ENCODE measurements at regions of chr3 and their contacts with region 1.

Region 1: DNA sequence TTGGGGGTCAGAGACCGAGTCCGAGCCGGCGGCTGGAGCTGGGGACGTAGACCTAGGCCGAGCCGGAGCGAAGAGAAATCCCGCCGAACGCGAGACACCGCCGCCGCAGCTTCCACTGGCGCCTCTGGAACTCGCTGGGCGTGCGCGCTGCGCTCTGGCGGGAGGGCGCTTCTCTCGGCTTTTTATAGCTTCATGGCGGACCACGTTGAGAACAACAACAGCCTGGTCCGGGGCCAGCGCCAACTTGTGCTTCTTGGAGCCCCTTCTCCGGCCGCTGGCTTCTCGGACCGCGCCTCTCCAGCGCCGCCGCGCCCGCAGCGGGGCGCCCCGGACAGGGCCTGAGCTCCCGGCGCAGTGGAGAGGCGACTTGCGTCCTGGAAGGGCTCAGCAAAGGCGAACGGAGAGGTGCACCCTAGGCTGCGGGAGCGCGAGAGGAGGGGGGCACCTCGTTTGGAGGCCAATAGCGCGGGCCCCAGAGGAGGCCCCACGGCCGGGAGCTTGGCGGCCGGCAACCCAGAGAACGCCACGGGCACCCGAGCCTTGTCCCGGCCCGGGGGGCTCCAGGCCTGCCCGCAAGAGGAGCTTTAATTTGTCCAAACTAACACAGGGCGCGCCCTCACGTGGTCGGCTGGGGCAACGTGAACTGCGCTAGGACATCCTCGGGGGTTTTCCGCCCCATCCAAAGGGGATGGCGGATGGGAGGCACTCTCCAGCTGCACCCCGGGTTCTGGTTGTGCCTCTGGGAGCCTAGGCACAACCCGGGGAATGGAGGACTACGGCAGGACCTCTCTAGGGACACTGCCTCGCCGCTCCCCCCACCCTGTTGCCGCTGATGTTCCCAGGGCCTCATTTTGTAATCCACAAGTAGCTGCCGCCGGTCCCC is 37.7 kb downstream of the HMCES start:
- DNase-seq: peak; percentile 75 to 78 (median 75)
- H3K4me3 ChIP-seq: peak overlapping the region; percentile 53 to 93 (median 80)
- H3K4me3 Mint-ChIP-seq: peak overlapping the region; percentile 81 to 97
- H3K27ac ChIP-seq: peak overlapping the region in 1 of 2 donors; percentile 77
- H3K27ac Mint-ChIP-seq: peak overlapping the region; percentile 24 to 80 (median 59)
- H3K4me1 ChIP-seq: peaks cover 24 to 30% of the 10 kb centered on the region in 2 donors
- H3K4me1 Mint-ChIP-seq: peaks cover 30% of the 10 kb centered on the region
- H3K27me3 ChIP-seq: no peaks in the 10 kb centered on the region
- H3K27me3 Mint-ChIP-seq: peaks cover 1 to 12% (median 4%) of the 10 kb centered on the region in 3 donors
- CTCF ChIP-seq: peak; percentile 56

Region 2: DNA sequence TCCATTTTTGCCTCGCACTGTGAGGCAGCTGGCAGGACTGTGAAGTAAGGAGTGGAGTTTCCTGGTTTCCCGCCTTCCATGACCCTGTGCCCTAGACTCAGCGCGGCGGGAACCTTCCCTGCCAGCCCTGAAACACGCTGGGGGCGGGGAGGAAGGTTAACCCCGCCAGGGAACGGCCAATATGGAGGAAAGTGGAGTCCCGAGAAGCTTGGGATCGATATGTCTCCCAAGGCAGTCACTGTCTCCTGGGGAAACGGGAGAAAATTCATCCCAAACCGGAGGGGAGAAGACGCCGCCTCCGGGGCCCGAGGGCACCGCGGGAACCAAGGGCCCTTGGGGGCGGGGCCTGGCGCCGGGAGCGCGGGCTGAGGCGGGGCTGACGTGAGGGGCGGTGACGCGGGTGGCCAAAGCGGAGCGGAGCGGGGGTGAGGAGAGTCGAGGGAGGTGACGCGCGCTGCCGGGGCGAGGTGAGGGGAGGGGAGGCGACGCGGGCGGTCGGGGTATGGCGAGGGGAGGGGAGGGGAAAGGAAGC is 37.9 kb before region 1 on chr3 and contains the start of gene HMCES:
- intact Hi-C with region 1: loop called in 1 of 2 experiments (anchors 5 kb)
- DNase-seq: peak; percentile 82 to 88 (median 86)
- H3K4me3 ChIP-seq: peak within 1 kb of the TSS; percentile 70 to 87 (median 75)
- H3K4me3 Mint-ChIP-seq: peak within 1 kb of the TSS; percentile 98 to 99
- H3K27ac ChIP-seq: peak within 1 kb of the TSS; percentile 42 to 77
- H3K27ac Mint-ChIP-seq: peak within 1 kb of the TSS; percentile 86 to 93 (median 90)
- H3K4me1 ChIP-seq: peaks cover 26 to 39% of the 10 kb centered on the region in 2 donors
- H3K4me1 Mint-ChIP-seq: peaks cover 35% of the 10 kb centered on the region
- H3K27me3 ChIP-seq: peaks cover 0 to 6% of the 10 kb centered on the region in 2 donors
- H3K27me3 Mint-ChIP-seq: peaks cover 4 to 8% (median 5%) of the 10 kb centered on the region in 3 donors
- CTCF ChIP-seq: no peak
- polyA plus RNA-seq, gene HMCES: 11.9 to 23.0 (median 18.0) TPM